Activated CD4-positive, alpha-beta T cell treated with anti-CD3 and anti-CD28 coated beads, Interleukin-2, amount 10 ng/mL, durations not matched to agents 7 days and 5 days (primary cell): ENCODE measurements at regions of chr5 and their contacts with region 1.

Region 1: DNA sequence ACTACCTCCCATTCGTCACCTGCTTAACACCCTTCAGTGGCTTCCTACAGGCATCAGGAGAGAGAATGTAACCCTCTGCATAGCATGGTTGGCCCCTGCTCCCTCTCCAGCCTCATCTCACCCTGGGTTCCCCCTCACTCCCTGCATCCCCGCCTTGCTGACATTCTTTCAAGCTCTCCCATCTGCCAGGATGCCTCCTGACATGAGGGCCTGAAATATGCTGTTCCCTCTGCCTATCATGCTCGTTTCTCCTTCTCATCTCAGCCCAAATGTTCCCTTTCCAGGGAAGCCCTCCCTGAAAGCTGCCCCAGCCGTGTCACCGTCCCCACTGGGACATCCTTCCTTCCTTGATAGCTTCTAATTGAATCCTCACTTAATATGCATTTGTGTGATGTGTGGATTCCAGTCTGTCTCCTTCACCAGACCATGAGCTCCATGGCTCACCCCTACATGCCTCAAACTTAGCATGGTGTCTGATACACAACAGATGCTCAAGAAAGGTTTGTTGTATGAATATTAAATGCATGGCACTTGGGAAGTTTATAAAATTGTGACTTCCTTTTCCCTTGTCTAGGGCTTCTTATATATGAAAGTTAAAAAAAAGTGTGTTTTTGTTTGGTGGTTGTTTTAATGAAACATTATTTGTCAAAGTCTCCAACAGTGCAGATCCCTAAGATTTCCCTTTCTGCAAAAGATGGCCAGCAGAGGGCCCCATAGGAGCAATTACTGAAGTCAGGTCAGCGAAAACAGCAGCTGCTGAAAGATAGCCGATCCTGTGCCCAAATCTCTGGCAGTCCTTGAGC is 7.3 kb upstream of the C5orf58 start:
- DNase-seq: peak; percentile 83
- H3K4me3 Mint-ChIP-seq: no peak overlapping the region
- H3K27ac Mint-ChIP-seq: no peak overlapping the region
- H3K4me1 Mint-ChIP-seq: peaks cover 7% of the 10 kb centered on the region
- H3K27me3 Mint-ChIP-seq: no peaks in the 10 kb centered on the region

Region 2: DNA sequence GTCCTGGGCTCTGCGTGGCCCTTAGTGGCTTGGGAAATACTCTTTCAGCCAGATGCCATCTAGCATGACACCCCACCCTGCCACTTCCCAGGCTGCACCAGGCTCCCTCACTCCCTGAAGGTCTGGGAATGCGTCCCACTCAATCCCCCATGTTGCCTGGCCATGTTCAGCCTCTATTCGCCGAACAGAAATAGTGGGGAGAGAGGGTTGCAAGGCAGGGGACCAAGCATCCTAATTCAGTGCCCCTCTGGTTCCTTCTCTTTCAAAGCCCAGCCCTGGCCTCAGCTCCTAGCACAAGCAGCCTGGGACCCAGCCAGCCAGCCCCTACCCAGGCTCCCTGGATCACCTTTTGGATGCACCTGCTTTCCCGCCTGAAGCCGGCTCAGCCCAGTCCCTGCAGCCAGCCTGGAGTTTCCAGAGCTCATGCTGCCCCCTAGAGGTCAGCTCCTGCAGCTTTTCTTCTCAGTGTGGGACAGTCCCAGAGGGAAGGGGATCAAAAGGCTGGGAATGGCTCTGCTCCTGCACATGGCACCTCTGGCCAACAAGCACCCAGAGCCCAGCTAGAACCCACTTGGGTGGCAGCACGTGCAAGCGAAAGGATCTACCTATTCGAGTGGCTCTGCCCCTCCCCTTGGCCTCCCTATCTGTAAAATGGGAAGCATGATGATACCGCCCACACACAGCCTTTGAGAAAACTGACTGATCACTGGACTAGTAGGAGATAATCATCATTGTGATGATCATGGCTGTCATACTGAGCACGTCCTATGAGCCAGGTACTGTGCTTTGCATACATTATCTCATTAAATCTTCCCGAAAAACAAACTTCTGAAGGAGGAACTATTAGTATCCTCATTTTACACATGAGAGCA is 41.5 kb before region 1 on chr5:
- CTCF ChIA-PET with region 1: no interaction called
- POLR2A ChIA-PET with region 1: no interaction called
- DNase-seq: peak; percentile 58
- H3K4me3 Mint-ChIP-seq: no peak overlapping the region
- H3K27ac Mint-ChIP-seq: no peak overlapping the region
- H3K4me1 Mint-ChIP-seq: no peaks in the 10 kb centered on the region
- H3K27me3 Mint-ChIP-seq: peaks cover 7% of the 10 kb centered on the region

Region 3: DNA sequence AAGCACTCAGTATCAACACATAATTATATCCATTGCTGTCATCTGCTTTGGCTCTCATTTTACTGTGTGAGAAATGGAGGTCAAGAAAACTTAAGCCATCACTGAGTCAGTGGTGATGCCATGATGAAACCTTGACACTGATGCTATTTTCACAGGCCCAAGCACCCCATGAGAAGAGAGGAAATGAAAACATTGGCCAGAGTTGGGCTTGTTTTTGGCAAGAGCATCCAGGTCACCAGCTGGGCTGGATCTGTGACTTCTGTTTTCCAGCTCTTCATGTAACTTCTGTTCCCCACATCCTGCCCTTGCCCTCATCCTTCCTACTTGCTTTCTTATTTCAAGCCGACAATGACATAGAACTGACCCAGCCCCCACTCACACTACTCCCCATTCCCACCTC is 62.0 kb after region 1 on chr5:
- CTCF ChIA-PET with region 1: no interaction called
- POLR2A ChIA-PET with region 1: no interaction called
- DNase-seq: no peak
- H3K4me3 Mint-ChIP-seq: peak overlapping the region; percentile 39
- H3K27ac Mint-ChIP-seq: peak overlapping the region; percentile 75
- H3K4me1 Mint-ChIP-seq: peaks cover 100% of the 10 kb centered on the region
- H3K27me3 Mint-ChIP-seq: no peaks in the 10 kb centered on the region

Region 4: GRCh38 chr5:170312666-170313065 is 87.1 kb after region 1 on chr5:
- CTCF ChIA-PET with region 1: no interaction called
- POLR2A ChIA-PET with region 1: no interaction called
- DNase-seq: peak; percentile 43
- H3K4me3 Mint-ChIP-seq: peak overlapping the region; percentile 23
- H3K27ac Mint-ChIP-seq: peak overlapping the region; percentile 82
- H3K4me1 Mint-ChIP-seq: peaks cover 46% of the 10 kb centered on the region
- H3K27me3 Mint-ChIP-seq: no peaks in the 10 kb centered on the region

Region 5: GRCh38 chr5:170333161-170333910 is 107.8 kb after region 1 on chr5:
- CTCF ChIA-PET with region 1: interaction called, 24 read pairs
- POLR2A ChIA-PET with region 1: no interaction called
- DNase-seq: peak; percentile 65
- H3K4me3 Mint-ChIP-seq: peak overlapping the region; percentile 66
- H3K27ac Mint-ChIP-seq: no peak overlapping the region
- H3K4me1 Mint-ChIP-seq: peaks cover 28% of the 10 kb centered on the region
- H3K27me3 Mint-ChIP-seq: no peaks in the 10 kb centered on the region

Region 6: DNA sequence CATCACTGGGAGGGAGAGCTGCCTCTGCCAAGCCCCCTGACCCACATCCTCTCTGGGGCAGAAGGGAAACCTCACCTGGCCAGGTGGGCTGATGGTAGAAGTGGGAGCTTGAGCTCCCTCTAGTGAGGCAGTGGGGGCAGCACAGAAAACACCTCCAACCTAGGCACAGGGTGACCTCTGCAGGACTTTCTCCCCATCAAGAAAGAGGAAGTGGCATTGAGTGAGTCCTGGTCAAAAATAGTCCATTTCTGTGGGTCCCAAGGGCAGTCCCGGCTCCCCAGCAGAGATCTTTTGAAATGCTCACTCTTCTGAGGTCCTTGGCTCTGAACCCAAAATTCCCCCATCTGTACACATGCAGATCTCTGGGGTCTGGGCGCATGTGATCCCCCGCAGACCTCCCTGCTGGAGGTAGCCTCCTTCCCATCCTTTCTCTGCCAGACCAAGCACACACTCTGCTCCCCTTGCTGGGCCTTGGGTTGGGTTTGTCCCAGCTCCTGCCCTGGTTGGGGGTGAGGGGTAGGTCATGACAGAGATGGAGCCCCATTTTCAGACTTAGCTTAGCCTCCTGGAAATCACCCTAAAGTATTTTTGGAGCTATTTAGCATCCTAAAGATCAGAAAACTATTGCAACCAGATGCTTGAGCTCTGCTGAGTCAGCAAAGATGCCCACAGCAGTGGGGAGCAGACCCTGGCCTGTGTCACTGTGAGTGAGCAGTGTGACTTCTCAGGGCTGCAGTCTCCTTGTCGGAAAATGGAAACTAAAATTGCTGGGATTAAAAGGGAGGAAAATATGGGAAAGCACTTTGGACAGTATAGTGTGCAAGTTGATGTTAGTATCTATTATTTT is 113.6 kb after region 1 on chr5:
- CTCF ChIA-PET with region 1: interaction called, 24 read pairs
- POLR2A ChIA-PET with region 1: interaction called, 3 read pairs
- DNase-seq: peak; percentile 72
- H3K4me3 Mint-ChIP-seq: no peak overlapping the region
- H3K27ac Mint-ChIP-seq: peak overlapping the region; percentile 25
- H3K4me1 Mint-ChIP-seq: peaks cover 39% of the 10 kb centered on the region
- H3K27me3 Mint-ChIP-seq: peaks cover 2% of the 10 kb centered on the region